ENCODE measurements at regions of chr1 and their contacts with region 1.

Region 1: GRCh38 chr1:201419746-201420607 is 1.6 kb downstream of the TNNI1 start:
- DNase-seq: no peak
- H3K4me3 ChIP-seq: no peak overlapping the region
- H3K27ac ChIP-seq: no peak overlapping the region
- H3K4me1 ChIP-seq: no peaks in the 10 kb centered on the region
- H3K27me3 ChIP-seq: peaks cover 7 to 18% of the 10 kb centered on the region in 2 experiments
- CTCF ChIP-seq: no peak
- POLR2A ChIP-seq: no peak

Region 2: GRCh38 chr1:201408176-201408833 is 11.7 kb before region 1 on chr1:
- CTCF ChIA-PET with region 1: interaction called, 14 read pairs
- POLR2A ChIA-PET with region 1: no interaction called
- dilution Hi-C with region 1: no loop called
- intact Hi-C with region 1: no loop called
- DNase-seq: peak; percentile 52
- H3K4me3 ChIP-seq: no peak overlapping the region
- H3K27ac ChIP-seq: no peak overlapping the region
- H3K4me1 ChIP-seq: no peaks in the 10 kb centered on the region
- H3K27me3 ChIP-seq: peaks cover 7 to 8% of the 10 kb centered on the region in 2 experiments
- CTCF ChIP-seq: peak; percentile 91 to 98
- POLR2A ChIP-seq: no peak